PC-3 (cell line): ENCODE measurements at regions of chr4 and their contacts with region 1.

Region 1: GRCh38 chr4:167721617-167722486 is 370.5 kb upstream of the ANXA10 start:
- DNase-seq: peak; percentile 64
- ATAC-seq: peak; percentile 95
- H3K4me3 ChIP-seq: no peak overlapping the region
- H3K27ac ChIP-seq: peak overlapping the region; percentile 49
- H3K4me1 ChIP-seq: peaks cover 17% of the 10 kb centered on the region
- H3K27me3 ChIP-seq: no peaks in the 10 kb centered on the region
- CTCF ChIP-seq: no peak

Region 2: GRCh38 chr4:167652267-167652666 is 69.6 kb before region 1 on chr4:
- CTCF ChIA-PET with region 1: no interaction called
- POLR2A ChIA-PET with region 1: no interaction called
- intact Hi-C with region 1: no loop called
- DNase-seq: no peak
- ATAC-seq: no peak
- H3K4me3 ChIP-seq: no peak overlapping the region
- H3K27ac ChIP-seq: no peak overlapping the region
- H3K4me1 ChIP-seq: no peaks in the 10 kb centered on the region
- H3K27me3 ChIP-seq: no peaks in the 10 kb centered on the region
- CTCF ChIP-seq: no peak

Region 3: GRCh38 chr4:167903291-167903721 is 181.5 kb after region 1 on chr4:
- CTCF ChIA-PET with region 1: no interaction called
- POLR2A ChIA-PET with region 1: no interaction called
- intact Hi-C with region 1: loop called (anchors 5 kb)
- DNase-seq: peak; percentile 73
- ATAC-seq: peak; percentile 92
- H3K4me3 ChIP-seq: peak overlapping the region; percentile 3; the same call in 1 of the 2 replicates
- H3K27ac ChIP-seq: peak overlapping the region; percentile 84
- H3K4me1 ChIP-seq: peaks cover 18% of the 10 kb centered on the region
- H3K27me3 ChIP-seq: no peaks in the 10 kb centered on the region
- CTCF ChIP-seq: no peak